CD4-positive, alpha-beta memory T cell (primary cell): ENCODE measurements at regions of chr10 and their contacts with region 1.

Region 1: DNA sequence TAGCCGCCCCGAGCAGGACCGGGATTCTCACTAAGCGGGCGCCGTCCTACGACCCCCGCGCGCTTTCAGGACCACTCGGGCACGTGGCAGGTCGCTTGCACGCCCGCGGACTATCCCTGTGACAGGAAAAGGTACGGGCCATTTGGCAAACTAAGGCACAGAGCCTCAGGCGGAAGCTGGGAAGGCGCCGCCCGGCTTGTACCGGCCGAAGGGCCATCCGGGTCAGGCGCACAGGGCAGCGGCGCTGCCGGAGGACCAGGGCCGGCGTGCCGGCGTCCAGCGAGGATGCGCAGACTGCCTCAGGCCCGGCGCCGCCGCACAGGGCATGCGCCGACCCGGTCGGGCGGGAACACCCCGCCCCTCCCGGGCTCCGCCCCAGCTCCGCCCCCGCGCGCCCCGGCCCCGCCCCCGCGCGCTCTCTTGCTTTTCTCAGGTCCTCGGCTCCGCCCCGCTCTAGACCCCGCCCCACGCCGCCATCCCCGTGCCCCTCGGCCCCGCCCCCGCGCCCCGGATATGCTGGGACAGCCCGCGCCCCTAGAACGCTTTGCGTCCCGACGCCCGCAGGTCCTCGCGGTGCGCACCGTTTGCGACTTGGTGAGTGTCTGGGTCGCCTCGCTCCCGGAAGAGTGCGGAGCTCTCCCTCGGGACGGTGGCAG is at the start of gene MGMT:
- DNase-seq: peak; percentile 94 to 98 (median 95)
- H3K4me3 ChIP-seq: peak within 1 kb of the TSS; percentile 20 to 80
- H3K4me3 Mint-ChIP-seq: peak within 1 kb of the TSS; percentile 82 to 90 (median 86)
- H3K27ac ChIP-seq: peak within 1 kb of the TSS; percentile 68
- H3K27ac Mint-ChIP-seq: peak within 1 kb of the TSS; percentile 78 to 88 (median 84)
- H3K4me1 ChIP-seq: peaks cover 17% of the 10 kb centered on the region
- H3K4me1 Mint-ChIP-seq: peaks cover 7 to 27% (median 14%) of the 10 kb centered on the region in 4 donors
- H3K27me3 ChIP-seq: no peaks in the 10 kb centered on the region
- H3K27me3 Mint-ChIP-seq: peaks cover 0 to 2% of the 10 kb centered on the region in 2 donors
- total RNA-seq, gene MGMT: 18.5 to 21.2 TPM

Region 2: DNA sequence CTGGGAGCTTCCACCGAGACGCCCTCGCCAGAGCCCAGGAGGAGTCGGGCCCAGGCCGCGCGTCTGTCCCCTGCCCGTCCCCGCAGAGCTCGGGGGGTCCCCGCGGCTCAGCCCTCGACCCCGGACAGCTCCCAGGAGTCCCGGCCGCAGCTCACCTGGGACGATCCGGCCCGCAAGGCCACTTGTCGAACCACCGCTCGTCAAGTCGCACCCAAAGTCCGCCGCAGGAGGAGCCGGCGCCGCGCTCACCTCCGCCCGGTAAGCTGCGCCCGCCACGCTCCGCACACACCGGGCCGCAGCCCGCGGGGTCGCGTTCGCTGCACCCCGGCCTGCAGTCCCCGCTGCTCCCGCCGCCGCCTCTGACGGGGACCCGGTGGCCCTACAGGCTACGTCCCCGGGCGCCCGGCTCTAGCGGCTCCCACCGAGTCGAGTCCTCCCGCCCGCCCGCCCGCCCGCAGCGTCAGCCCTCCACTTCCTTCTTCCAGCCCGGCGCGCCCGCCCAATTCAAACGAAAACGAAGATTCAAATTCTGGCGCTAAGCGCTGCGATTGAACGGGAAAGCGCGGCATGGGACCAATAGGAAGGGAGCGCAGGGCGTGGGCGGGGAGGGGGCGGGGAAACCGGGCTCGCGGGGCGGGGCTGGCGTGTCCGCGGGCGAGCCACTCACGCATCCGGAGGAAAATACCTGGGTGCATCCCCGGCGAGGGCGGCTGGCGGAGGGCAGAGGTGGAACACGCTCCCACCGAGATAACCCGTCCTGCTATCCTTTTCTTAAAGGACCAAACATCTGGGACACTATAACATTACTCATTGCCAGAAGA is 1340.7 kb before region 1 on chr10 and contains the start of gene MKI67:
- CTCF ChIA-PET with region 1: no interaction called
- POLR2A ChIA-PET with region 1: no interaction called
- intact Hi-C with region 1: loop called (anchors 10 kb)
- DNase-seq: peak; percentile 87 to 92 (median 88)
- H3K4me3 ChIP-seq: peak within 1 kb of the TSS; percentile 70 to 71
- H3K4me3 Mint-ChIP-seq: peak within 1 kb of the TSS; percentile 90 to 96 (median 93)
- H3K27ac ChIP-seq: peak within 1 kb of the TSS; percentile 72
- H3K27ac Mint-ChIP-seq: peak within 1 kb of the TSS; percentile 71 to 95 (median 90)
- H3K4me1 ChIP-seq: peaks cover 42% of the 10 kb centered on the region
- H3K4me1 Mint-ChIP-seq: peaks cover 11 to 37% (median 30%) of the 10 kb centered on the region in 4 donors
- H3K27me3 ChIP-seq: peaks cover 12% of the 10 kb centered on the region
- H3K27me3 Mint-ChIP-seq: peaks cover 6 to 20% of the 10 kb centered on the region in 2 donors
- total RNA-seq, gene MKI67: 0.17 to 0.93 TPM

Region 3: GRCh38 chr10:130301021-130301892 is 834.4 kb after region 1 on chr10:
- CTCF ChIA-PET with region 1: no interaction called
- POLR2A ChIA-PET with region 1: interaction called, 6 read pairs
- intact Hi-C with region 1: loop called (anchors 5 kb)
- DNase-seq: peak; percentile 65 to 75 (median 69)
- H3K4me3 ChIP-seq: peak overlapping the region in 1 of 2 donors; percentile 9
- H3K4me3 Mint-ChIP-seq: peak overlapping the region; percentile 26 to 85 (median 76)
- H3K27ac ChIP-seq: peak overlapping the region; percentile 25
- H3K27ac Mint-ChIP-seq: peak overlapping the region in 5 of 7 donors; percentile 79 to 85 (median 82)
- H3K4me1 ChIP-seq: peaks cover 6% of the 10 kb centered on the region
- H3K4me1 Mint-ChIP-seq: peaks cover 5 to 26% (median 8%) of the 10 kb centered on the region in 4 donors
- H3K27me3 ChIP-seq: no peaks in the 10 kb centered on the region
- H3K27me3 Mint-ChIP-seq: no peaks in the 10 kb centered on the region